ENCODE measurements at regions of chr17 and their contacts with region 1.

Region 1: GRCh38 chr17:10115071-10115539 is 83.3 kb downstream of the GAS7 start:
- DNase-seq: peak; percentile 83 to 88
- ATAC-seq: peak; percentile 70 to 88 (median 74)
- H3K4me3 ChIP-seq: peak overlapping the region; percentile 37
- H3K4me3 Mint-ChIP-seq: peak overlapping the region; percentile 83
- H3K27ac ChIP-seq: peak overlapping the region; percentile 93
- H3K27ac Mint-ChIP-seq: peak overlapping the region; percentile 99 to 100
- H3K4me1 ChIP-seq: peaks cover 87% of the 10 kb centered on the region
- H3K4me1 Mint-ChIP-seq: peaks cover 84 to 87% of the 10 kb centered on the region in 2 donors
- H3K27me3 ChIP-seq: no peaks in the 10 kb centered on the region
- H3K27me3 Mint-ChIP-seq: no peaks in the 10 kb centered on the region
- CTCF ChIP-seq: no peak

Region 2: GRCh38 chr17:9183306-9183705 is 931.8 kb before region 1 on chr17:
- intact Hi-C with region 1: no loop called
- DNase-seq: peak in 1 of 2 donors; percentile 35
- ATAC-seq: peak in 2 of 3 donors; percentile 18 to 67
- H3K4me3 ChIP-seq: no peak overlapping the region
- H3K4me3 Mint-ChIP-seq: peak overlapping the region; percentile 45
- H3K27ac ChIP-seq: no peak overlapping the region
- H3K27ac Mint-ChIP-seq: no peak overlapping the region
- H3K4me1 ChIP-seq: peaks cover 15% of the 10 kb centered on the region
- H3K4me1 Mint-ChIP-seq: peaks cover 0 to 8% of the 10 kb centered on the region in 2 donors
- H3K27me3 ChIP-seq: peaks cover 2% of the 10 kb centered on the region
- H3K27me3 Mint-ChIP-seq: peaks cover 0 to 19% of the 10 kb centered on the region in 2 donors
- CTCF ChIP-seq: no peak

Region 3: GRCh38 chr17:9987779-9988574 is 127.1 kb before region 1 on chr17:
- intact Hi-C with region 1: loop called (anchors 10 kb)
- DNase-seq: peak; percentile 45 to 66
- ATAC-seq: peak; percentile 66 to 84 (median 84)
- H3K4me3 ChIP-seq: no peak overlapping the region
- H3K4me3 Mint-ChIP-seq: no peak overlapping the region
- H3K27ac ChIP-seq: no peak overlapping the region
- H3K27ac Mint-ChIP-seq: peak overlapping the region; percentile 55 to 60
- H3K4me1 ChIP-seq: peaks cover 29% of the 10 kb centered on the region
- H3K4me1 Mint-ChIP-seq: peaks cover 47 to 51% of the 10 kb centered on the region in 2 donors
- H3K27me3 ChIP-seq: no peaks in the 10 kb centered on the region
- H3K27me3 Mint-ChIP-seq: no peaks in the 10 kb centered on the region
- CTCF ChIP-seq: peak; percentile 92

Region 4: DNA sequence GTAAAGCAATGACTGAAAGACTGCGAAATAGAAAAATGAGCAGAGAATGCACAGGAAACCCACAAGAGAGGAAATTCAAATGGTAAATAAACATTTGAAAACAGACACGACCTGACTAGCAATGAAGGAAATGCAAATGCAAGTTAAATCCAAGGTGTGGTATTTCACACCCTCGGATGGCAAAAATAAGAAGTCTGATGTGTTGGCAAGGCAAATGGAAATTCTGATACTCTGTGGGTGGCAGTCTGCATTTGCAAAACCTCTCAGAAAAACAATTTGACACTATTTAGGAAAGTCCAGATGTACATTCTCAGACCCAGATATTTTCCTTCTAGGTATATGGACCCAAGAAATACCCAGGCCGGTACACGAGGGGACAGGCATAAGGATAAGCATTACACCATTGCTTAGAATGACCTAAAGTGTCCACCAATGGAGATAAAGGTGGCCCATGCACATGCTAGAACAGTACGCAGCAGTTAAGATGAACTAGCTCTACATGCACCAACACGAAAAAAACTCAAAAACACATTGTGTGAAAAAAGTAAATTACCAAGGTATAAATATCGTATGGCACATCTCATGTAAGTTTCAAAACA is 33.4 kb before region 1 on chr17:
- intact Hi-C with region 1: loop called (anchors 1 kb)
- DNase-seq: peak; percentile 17 to 58
- ATAC-seq: peak; percentile 57 to 78 (median 72)
- H3K4me3 ChIP-seq: no peak overlapping the region
- H3K4me3 Mint-ChIP-seq: peak overlapping the region; percentile 81
- H3K27ac ChIP-seq: peak overlapping the region; percentile 72
- H3K27ac Mint-ChIP-seq: peak overlapping the region; percentile 87 to 94
- H3K4me1 ChIP-seq: peaks cover 33% of the 10 kb centered on the region
- H3K4me1 Mint-ChIP-seq: peaks cover 72 to 76% of the 10 kb centered on the region in 2 donors
- H3K27me3 ChIP-seq: no peaks in the 10 kb centered on the region
- H3K27me3 Mint-ChIP-seq: no peaks in the 10 kb centered on the region
- CTCF ChIP-seq: no peak

Region 5: DNA sequence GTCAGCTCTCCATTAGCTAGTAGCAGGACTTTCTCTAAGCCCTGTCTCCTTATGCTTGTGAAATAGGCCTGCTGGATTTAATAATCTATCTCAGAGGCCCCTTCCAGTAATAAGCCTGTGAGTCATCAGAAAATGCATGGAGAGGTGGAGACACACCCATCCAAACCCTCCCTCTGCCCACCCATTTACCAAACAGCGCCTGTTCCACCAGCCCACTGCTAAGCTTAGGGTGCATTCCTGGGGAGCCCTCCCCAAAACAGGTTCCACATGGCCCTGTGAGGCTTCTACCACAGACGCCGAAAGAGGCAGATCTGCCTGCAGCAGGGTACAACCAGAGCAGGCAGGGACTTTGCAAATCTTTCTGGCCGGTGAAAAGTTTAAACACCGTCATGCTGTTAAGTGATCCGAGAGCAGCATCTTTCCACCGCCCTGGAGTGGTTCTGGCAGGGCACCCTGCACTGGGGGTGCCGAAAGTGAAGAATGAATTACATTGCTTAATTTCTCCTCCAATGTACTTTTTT is 16.0 kb before region 1 on chr17:
- intact Hi-C with region 1: no loop called
- DNase-seq: no peak
- ATAC-seq: no peak
- H3K4me3 ChIP-seq: no peak overlapping the region
- H3K4me3 Mint-ChIP-seq: no peak overlapping the region
- H3K27ac ChIP-seq: no peak overlapping the region
- H3K27ac Mint-ChIP-seq: no peak overlapping the region
- H3K4me1 ChIP-seq: peaks cover 25% of the 10 kb centered on the region
- H3K4me1 Mint-ChIP-seq: peaks cover 40 to 46% of the 10 kb centered on the region in 2 donors
- H3K27me3 ChIP-seq: no peaks in the 10 kb centered on the region
- H3K27me3 Mint-ChIP-seq: no peaks in the 10 kb centered on the region
- CTCF ChIP-seq: no peak

Region 6: DNA sequence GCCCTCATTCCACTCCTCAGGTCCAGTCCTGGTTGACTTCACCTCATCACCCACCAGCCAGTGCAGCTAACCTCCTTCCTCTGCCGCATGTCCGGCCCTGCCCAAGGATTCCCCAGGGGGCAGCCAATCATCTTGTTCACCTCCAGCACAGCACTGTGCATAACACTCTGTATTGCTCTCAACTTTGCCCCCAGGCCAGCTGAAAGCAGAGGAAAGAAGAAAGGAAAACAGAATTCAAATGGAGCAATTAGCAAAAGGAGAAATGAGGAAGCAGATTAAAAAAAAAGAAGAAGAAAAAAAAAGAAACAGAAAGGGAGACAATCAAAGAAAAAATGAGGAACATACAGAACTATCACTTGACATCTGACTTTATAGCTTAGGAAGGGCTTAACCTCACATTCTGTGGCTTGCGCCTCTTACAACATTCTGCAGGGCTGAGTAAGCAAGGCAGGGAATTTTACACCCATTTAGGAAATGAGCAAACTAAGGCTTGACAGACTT is 57.2 kb after region 1 on chr17:
- intact Hi-C with region 1: loop called (anchors 2 kb)
- DNase-seq: peak in 1 of 2 donors; percentile 12
- ATAC-seq: peak; percentile 31 to 59 (median 48)
- H3K4me3 ChIP-seq: no peak overlapping the region
- H3K4me3 Mint-ChIP-seq: peak overlapping the region; percentile 61
- H3K27ac ChIP-seq: peak overlapping the region; percentile 84
- H3K27ac Mint-ChIP-seq: peak overlapping the region; percentile 89 to 90
- H3K4me1 ChIP-seq: peaks cover 66% of the 10 kb centered on the region
- H3K4me1 Mint-ChIP-seq: peaks cover 59 to 64% of the 10 kb centered on the region in 2 donors
- H3K27me3 ChIP-seq: no peaks in the 10 kb centered on the region
- H3K27me3 Mint-ChIP-seq: no peaks in the 10 kb centered on the region
- CTCF ChIP-seq: no peak

Region 7: DNA sequence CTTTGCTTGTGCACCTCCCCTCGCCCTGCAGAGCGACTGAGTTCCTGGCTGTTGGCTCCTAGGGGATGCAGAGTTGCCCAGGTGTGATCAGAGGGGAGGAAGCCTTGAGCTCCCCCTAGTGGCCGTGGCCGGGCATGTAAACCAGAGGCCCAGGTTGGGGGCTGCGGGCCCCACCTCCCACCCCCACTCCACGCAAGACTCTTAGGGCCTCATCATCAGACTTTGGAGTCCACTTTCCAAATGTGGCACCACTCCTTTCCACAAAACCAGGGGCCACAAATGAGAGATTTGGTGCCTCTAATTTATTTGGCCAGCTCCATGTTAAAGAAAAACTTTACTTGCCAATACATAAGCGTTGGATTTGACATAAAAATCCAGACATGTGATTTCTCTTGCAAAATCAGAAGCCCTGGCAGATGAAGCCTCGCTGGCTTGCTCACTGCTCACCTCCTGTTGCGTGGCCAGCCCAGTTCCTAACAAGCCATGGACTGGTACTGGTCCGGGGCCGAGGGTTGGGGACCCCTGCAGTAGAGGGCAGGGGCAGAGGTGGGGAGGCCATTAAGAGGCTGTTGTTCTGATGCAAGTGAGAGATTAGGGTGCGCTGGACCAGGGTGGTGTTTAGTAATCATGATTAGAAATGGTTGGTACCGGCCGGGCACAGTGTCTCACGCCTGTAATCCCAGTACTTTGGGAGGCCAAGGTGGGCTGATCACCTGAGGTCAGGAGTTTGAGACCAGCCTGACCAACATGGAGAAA is 112.0 kb after region 1 on chr17:
- intact Hi-C with region 1: loop called (anchors 5 kb)
- DNase-seq: peak; percentile 62 to 72
- ATAC-seq: peak; percentile 73 to 88 (median 81)
- H3K4me3 ChIP-seq: no peak overlapping the region
- H3K4me3 Mint-ChIP-seq: no peak overlapping the region
- H3K27ac ChIP-seq: no peak overlapping the region
- H3K27ac Mint-ChIP-seq: no peak overlapping the region
- H3K4me1 ChIP-seq: peaks cover 12% of the 10 kb centered on the region
- H3K4me1 Mint-ChIP-seq: peaks cover 5 to 17% of the 10 kb centered on the region in 2 donors
- H3K27me3 ChIP-seq: no peaks in the 10 kb centered on the region
- H3K27me3 Mint-ChIP-seq: peaks cover 0 to 2% of the 10 kb centered on the region in 2 donors
- CTCF ChIP-seq: peak; percentile 99

Measured in natural killer cell (primary cell).